K562 (cell line): ENCODE measurements at regions of chr14 and their contacts with region 1.

Region 1: DNA sequence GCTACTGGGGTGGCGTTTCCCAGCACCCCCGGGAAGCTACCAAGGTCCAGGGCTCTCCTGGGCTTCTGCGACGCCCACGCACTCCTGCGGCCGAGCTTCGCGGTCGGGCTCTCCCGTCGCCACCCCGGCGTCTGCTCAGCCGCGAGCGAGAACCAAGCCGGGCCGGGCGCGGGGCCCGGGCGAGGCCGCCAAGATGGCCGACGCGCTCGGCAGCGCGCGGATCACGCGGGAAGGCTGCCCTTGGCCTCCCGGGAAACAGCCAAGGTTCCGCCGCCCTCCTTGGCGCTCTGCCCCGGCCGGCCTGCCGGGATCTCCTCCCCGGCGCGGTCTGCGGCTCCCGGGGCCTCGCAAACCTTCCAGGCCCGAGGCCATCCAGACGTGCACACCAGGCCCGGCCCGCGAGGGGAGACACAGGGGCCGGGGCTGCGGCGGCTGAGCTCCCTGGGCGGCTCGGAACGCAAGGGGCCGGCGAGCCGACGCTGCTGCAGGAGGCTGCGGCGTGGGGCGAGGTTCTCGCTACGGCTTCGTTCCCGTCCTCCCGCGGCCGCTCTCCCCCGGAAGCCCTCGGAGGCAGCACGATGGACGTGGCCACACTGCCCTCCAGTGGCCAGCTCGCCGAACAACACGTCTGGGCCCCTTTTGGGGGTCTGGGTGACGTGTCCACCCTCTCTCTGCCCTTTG is 23.5 kb upstream of the ZFP36L1 start:
- DNase-seq: peak; percentile 84 to 91 (median 87)
- ATAC-seq: peak; percentile 91
- H3K4me3 ChIP-seq: peak overlapping the region; percentile 40
- H3K27ac ChIP-seq: peak overlapping the region; percentile 95
- H3K4me1 ChIP-seq: peaks cover 31 to 44% of the 10 kb centered on the region in 2 experiments
- H3K27me3 ChIP-seq: no peaks in the 10 kb centered on the region
- CTCF ChIP-seq: peak; percentile 84 to 88 (median 87)
- EP300 ChIP-seq: no peak
- POLR2A ChIP-seq: peak; percentile 60
- RAD21 ChIP-seq: peak; percentile 93

Region 2: GRCh38 chr14:67943947-67944346 is 872.5 kb before region 1 on chr14:
- CTCF ChIA-PET with region 1: interaction called, 6 read pairs
- POLR2A ChIA-PET with region 1: no interaction called
- in situ Hi-C with region 1: loop called (anchors 10 kb)
- intact Hi-C with region 1: loop called (anchors 5 kb)
- DNase-seq: peak; percentile 15 to 79 (median 30)
- ATAC-seq: peak; percentile 80
- H3K4me3 ChIP-seq: no peak overlapping the region
- H3K27ac ChIP-seq: no peak overlapping the region
- H3K4me1 ChIP-seq: no peaks in the 10 kb centered on the region
- H3K27me3 ChIP-seq: no peaks in the 10 kb centered on the region
- CTCF ChIP-seq: peak; percentile 60 to 75 (median 72)
- EP300 ChIP-seq: no peak
- POLR2A ChIP-seq: no peak
- RAD21 ChIP-seq: peak; percentile 67 to 78

Region 3: GRCh38 chr14:68248481-68249255 is 567.7 kb before region 1 on chr14:
- CTCF ChIA-PET with region 1: interaction called, 6 read pairs
- POLR2A ChIA-PET with region 1: no interaction called
- in situ Hi-C with region 1: loop called (anchors 10 kb)
- intact Hi-C with region 1: loop called (anchors 1 kb)
- DNase-seq: peak in 2 of 4 experiments; percentile 31 to 38
- ATAC-seq: peak; percentile 56
- H3K4me3 ChIP-seq: no peak overlapping the region
- H3K27ac ChIP-seq: no peak overlapping the region
- H3K4me1 ChIP-seq: peaks cover 0 to 41% of the 10 kb centered on the region in 2 experiments; a peak in 2 of 5 replicates
- H3K27me3 ChIP-seq: no peaks in the 10 kb centered on the region
- CTCF ChIP-seq: peak; percentile 29 to 65 (median 44); a peak in 4 of 6 replicates
- EP300 ChIP-seq: no peak
- POLR2A ChIP-seq: no peak
- RAD21 ChIP-seq: peak; percentile 81 to 82

Region 4: GRCh38 chr14:68520637-68521556 is 295.5 kb before region 1 on chr14:
- CTCF ChIA-PET with region 1: no interaction called
- POLR2A ChIA-PET with region 1: no interaction called
- in situ Hi-C with region 1: no loop called
- intact Hi-C with region 1: loop called (anchors 5 kb)
- DNase-seq: no peak
- ATAC-seq: no peak
- H3K4me3 ChIP-seq: no peak overlapping the region
- H3K27ac ChIP-seq: no peak overlapping the region
- H3K4me1 ChIP-seq: no peaks in the 10 kb centered on the region
- H3K27me3 ChIP-seq: no peaks in the 10 kb centered on the region
- CTCF ChIP-seq: no peak
- EP300 ChIP-seq: no peak
- POLR2A ChIP-seq: no peak
- RAD21 ChIP-seq: no peak

Region 5: GRCh38 chr14:68718023-68718995 is 98.1 kb before region 1 on chr14:
- CTCF ChIA-PET with region 1: interaction called, 3 read pairs
- POLR2A ChIA-PET with region 1: no interaction called
- in situ Hi-C with region 1: no loop called
- intact Hi-C with region 1: loop called (anchors 1 kb)
- DNase-seq: no peak
- ATAC-seq: no peak
- H3K4me3 ChIP-seq: no peak overlapping the region
- H3K27ac ChIP-seq: no peak overlapping the region
- H3K4me1 ChIP-seq: peaks cover 3 to 34% of the 10 kb centered on the region in 2 experiments; a peak in 3 of 5 replicates
- H3K27me3 ChIP-seq: no peaks in the 10 kb centered on the region
- CTCF ChIP-seq: 0 out of 6 replicates have a peak, but pooled peaks of 1 of the 3 experiments have one; percentile 21
- EP300 ChIP-seq: no peak
- POLR2A ChIP-seq: no peak
- RAD21 ChIP-seq: no peak

Region 6: GRCh38 chr14:68788996-68789820 is 27.2 kb before region 1 on chr14:
- CTCF ChIA-PET with region 1: interaction called, 3 read pairs
- POLR2A ChIA-PET with region 1: interaction called, 16 read pairs
- in situ Hi-C with region 1: no loop called
- intact Hi-C with region 1: no loop called
- DNase-seq: peak; percentile 65 to 78 (median 70)
- ATAC-seq: peak; percentile 64
- H3K4me3 ChIP-seq: no peak overlapping the region
- H3K27ac ChIP-seq: no peak overlapping the region; the same call in 2 of the 3 replicates
- H3K4me1 ChIP-seq: peaks cover 25 to 30% of the 10 kb centered on the region in 2 experiments; a peak in 4 of 5 replicates
- H3K27me3 ChIP-seq: no peaks in the 10 kb centered on the region
- CTCF ChIP-seq: peak; percentile 80 to 99 (median 93)
- EP300 ChIP-seq: no peak
- POLR2A ChIP-seq: no peak
- RAD21 ChIP-seq: peak; percentile 90 to 96

Region 7: GRCh38 chr14:68795597-68796417 is 20.6 kb before region 1 on chr14:
- CTCF ChIA-PET with region 1: no interaction called
- POLR2A ChIA-PET with region 1: interaction called, 16 read pairs
- in situ Hi-C with region 1: no loop called
- intact Hi-C with region 1: loop called (anchors 2 kb)
- DNase-seq: peak; percentile 76 to 85 (median 78)
- ATAC-seq: peak; percentile 82
- H3K4me3 ChIP-seq: peak overlapping the region; percentile 65
- H3K27ac ChIP-seq: peak overlapping the region; percentile 100
- H3K4me1 ChIP-seq: peaks cover 21 to 33% of the 10 kb centered on the region in 2 experiments; a peak in 4 of 5 replicates
- H3K27me3 ChIP-seq: no peaks in the 10 kb centered on the region
- CTCF ChIP-seq: peak; percentile 57 to 67 (median 61); a peak in 5 of 6 replicates
- EP300 ChIP-seq: peak; percentile 2; the same call in 1 of the 2 replicates
- POLR2A ChIP-seq: peak; percentile 79
- RAD21 ChIP-seq: peak; percentile 18 to 34; a peak in 3 of 4 replicates